WTC11 (cell line): ENCODE measurements at regions of chr2 and their contacts with region 1.

Region 1: GRCh38 chr2:61529944-61530735 is 8.0 kb downstream of the XPO1 start:
- DNase-seq: no peak
- ATAC-seq: no peak
- H3K4me3 Mint-ChIP-seq: no peak overlapping the region
- H3K27ac Mint-ChIP-seq: no peak overlapping the region; the same call in 1 of the 2 replicates
- H3K4me1 Mint-ChIP-seq: peaks cover 53% of the 10 kb centered on the region
- H3K27me3 Mint-ChIP-seq: no peaks in the 10 kb centered on the region
- CTCF ChIP-seq: no peak

Region 2: DNA sequence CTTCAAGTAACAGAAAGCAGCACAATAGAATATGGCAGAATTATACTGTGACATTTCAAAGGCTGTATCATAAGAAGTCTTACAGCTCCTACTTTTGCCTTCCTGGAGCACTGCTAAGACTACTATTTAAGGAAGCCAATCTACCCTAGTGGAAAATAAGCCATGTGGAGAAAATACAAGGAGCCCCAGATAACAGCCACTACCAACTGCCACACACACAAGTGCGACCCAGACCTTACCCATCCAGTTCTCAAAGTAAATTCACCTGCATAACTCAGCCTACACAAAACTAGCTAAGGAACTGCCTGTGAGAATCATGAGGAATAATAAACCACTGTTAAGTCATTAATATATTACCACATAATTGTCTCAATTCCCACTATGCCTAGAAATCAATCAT is 125.7 kb before region 1 on chr2:
- CTCF ChIA-PET with region 1: no interaction called
- POLR2A ChIA-PET with region 1: interaction called, 11 read pairs
- DNase-seq: no peak
- ATAC-seq: no peak
- H3K4me3 Mint-ChIP-seq: no peak overlapping the region
- H3K27ac Mint-ChIP-seq: 0 out of 2 replicates have a peak overlapping the region, but pooled peaks have one; percentile 9
- H3K4me1 Mint-ChIP-seq: peaks cover 4% of the 10 kb centered on the region; the same call in 1 of the 2 replicates
- H3K27me3 Mint-ChIP-seq: no peaks in the 10 kb centered on the region
- CTCF ChIP-seq: no peak